H1 (cell line): ENCODE measurements at regions of chr2 and their contacts with region 1.

Region 1: DNA sequence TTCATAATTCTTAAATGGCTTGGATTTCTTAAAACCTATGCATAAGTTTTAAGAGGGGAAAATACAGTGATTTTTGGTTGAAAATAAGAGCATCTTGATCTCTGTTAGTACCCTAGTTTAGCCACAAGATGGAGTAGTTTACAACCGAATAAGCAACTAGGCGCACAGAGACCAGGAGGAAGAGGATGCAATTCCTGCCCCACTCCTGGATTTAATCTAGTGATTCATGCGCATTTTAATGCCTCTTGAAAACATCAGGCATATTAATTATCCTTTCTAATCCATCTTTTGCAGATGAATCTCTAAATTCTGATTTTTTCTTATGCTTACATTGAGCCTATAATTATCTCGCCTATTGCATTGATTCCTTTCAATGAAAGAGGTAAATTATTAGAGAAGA is 76.7 kb downstream of the MRPS9 start:
- DNase-seq: no peak
- H3K4me3 ChIP-seq: no peak overlapping the region
- H3K27ac ChIP-seq: no peak overlapping the region
- H3K4me1 ChIP-seq: no peaks in the 10 kb centered on the region
- H3K27me3 ChIP-seq: no peaks in the 10 kb centered on the region
- CTCF ChIP-seq: peak in 2 of 3 experiments; percentile 64 to 75; a peak in 3 of 4 replicates
- EP300 ChIP-seq: no peak
- POLR2A ChIP-seq: no peak
- RAD21 ChIP-seq: peak; percentile 93

Region 2: DNA sequence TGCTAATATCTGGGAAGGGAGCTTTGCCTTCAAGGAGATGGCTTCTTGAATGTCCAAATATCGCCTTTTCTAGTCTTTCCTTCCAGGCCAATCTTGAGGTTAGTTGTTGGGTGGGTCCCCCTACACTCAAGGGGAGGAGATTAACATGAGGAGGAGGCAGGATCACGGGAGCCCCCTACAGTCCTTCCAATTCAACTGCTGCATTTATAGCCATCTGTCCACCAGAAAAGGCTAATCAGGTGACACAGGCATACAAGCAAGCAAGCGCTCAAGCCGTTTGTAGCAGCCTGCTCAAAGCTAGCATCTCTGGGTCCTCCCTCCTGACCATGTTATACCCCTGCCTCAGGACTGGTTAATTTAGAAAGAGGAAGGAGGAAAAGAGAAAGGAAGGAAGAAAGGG is 10.9 kb after region 1 on chr2:
- CTCF ChIA-PET with region 1: interaction called, 46 read pairs
- POLR2A ChIA-PET with region 1: interaction called, 3 read pairs
- DNase-seq: peak in 1 of 2 experiments; percentile 61
- H3K4me3 ChIP-seq: peak overlapping the region in 2 of 4 experiments; percentile 26 to 43; a peak in 2 of 8 replicates
- H3K27ac ChIP-seq: no peak overlapping the region
- H3K4me1 ChIP-seq: peaks cover 0 to 6% (median 2%) of the 10 kb centered on the region in 4 experiments; a peak in 2 of 7 replicates
- H3K27me3 ChIP-seq: no peaks in the 10 kb centered on the region
- CTCF ChIP-seq: peak; percentile 53 to 77 (median 59)
- EP300 ChIP-seq: no peak
- POLR2A ChIP-seq: no peak
- RAD21 ChIP-seq: peak; percentile 30 to 48

Region 3: DNA sequence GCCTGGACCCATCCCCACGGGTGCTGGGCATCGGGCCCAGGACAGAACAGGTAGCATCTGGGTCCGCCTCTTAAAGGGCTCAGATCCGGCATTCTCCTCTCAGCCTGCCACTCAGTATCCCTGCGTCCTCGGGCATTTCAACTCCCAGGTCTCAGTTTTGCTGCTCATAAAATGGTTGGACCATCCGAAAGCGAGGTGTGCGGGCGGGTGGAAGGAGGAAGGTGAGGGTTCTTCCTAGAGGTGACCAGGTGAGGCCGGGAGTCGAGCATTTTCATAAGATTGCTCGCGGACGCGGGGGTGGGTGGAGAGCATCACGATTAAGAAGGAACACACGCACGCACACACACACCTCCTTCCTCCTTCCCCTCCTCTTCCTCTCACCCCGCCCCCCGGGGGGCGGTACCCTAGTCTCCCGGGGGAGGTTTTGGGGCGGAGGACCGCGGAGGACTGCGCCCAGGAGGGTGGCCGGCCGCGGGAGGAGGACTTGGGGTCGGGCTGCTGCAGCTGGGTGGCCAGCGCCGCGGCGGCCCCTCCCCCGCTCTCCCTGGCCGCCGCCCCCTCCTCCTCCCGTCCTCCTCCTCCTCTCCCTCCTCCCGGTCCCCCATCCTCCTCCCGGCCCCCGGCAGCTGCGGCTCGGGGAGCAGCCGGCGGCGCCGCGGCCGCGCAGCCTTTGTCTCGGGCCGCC is 29.1 kb after region 1 on chr2:
- CTCF ChIA-PET with region 1: interaction called, 65 read pairs
- POLR2A ChIA-PET with region 1: no interaction called
- DNase-seq: peak in 1 of 2 experiments; percentile 85
- H3K4me3 ChIP-seq: peak overlapping the region; percentile 61 to 78 (median 72)
- H3K27ac ChIP-seq: no peak overlapping the region
- H3K4me1 ChIP-seq: peaks cover 0 to 5% (median 2%) of the 10 kb centered on the region in 4 experiments; a peak in 3 of 7 replicates
- H3K27me3 ChIP-seq: peaks cover 0 to 3% (median 0%) of the 10 kb centered on the region in 4 experiments; a peak in 1 of 7 replicates
- CTCF ChIP-seq: no peak
- EP300 ChIP-seq: 0 out of 3 replicates have a peak, but pooled peaks of 1 of the 2 experiments have one; percentile 20
- POLR2A ChIP-seq: peak in 1 of 2 experiments; percentile 29; a peak in 1 of 3 replicates
- RAD21 ChIP-seq: no peak

Region 4: DNA sequence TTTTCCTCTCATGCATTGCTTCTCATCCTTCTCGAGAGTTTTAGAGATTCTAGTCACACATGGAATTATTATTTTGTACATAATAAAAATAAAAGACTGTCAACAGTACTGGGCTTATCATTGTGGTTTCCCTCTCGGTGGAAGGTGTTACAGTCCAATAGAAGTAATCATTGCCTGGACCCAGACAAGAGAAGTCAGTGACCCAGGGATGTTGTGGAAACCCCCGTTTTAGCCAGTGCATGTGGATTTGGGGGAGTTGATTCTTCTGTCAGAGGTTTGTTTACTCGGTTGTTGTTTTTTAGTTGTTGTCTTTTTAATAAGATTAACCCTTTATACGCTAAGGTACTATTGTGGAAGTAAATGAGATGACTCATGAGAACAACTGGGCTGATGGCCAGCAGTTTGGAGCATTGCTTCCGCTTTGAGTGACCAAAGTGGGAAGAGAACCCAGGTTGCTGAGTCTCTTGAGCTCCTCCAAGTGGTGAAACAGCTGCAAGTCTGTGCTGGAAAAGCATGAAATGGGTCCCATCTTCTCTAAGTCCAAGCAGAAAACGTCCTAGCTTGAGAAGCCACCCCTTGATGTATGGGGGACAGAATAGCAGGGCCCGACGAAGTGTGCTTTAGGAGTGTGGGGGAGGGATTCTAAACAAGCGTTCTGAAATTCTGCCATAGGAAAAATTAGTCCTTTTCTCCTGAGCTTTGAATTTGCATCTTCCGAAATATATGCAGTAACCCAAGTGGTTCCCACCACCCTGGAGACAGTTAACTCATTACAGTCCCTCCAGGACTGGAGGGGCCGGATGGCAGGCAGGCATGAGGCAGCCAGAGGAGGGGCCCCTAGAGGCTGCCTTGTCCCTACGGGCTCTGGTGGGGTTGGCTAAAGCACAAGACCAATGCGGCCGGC is 65.2 kb after region 1 on chr2:
- CTCF ChIA-PET with region 1: interaction called, 91 read pairs
- POLR2A ChIA-PET with region 1: no interaction called
- DNase-seq: no peak
- H3K4me3 ChIP-seq: no peak overlapping the region; a peak in 2 of 8 replicates
- H3K27ac ChIP-seq: no peak overlapping the region
- H3K4me1 ChIP-seq: peaks cover 6 to 17% (median 13%) of the 10 kb centered on the region in 4 experiments
- H3K27me3 ChIP-seq: peaks cover 0 to 27% (median 22%) of the 10 kb centered on the region in 4 experiments; a peak in 6 of 7 replicates
- CTCF ChIP-seq: peak; percentile 38 to 74 (median 65)
- EP300 ChIP-seq: no peak
- POLR2A ChIP-seq: no peak
- RAD21 ChIP-seq: peak; percentile 53 to 65

Region 5: GRCh38 chr2:105224444-105224843 is 109.9 kb after region 1 on chr2:
- CTCF ChIA-PET with region 1: interaction called, 541 read pairs
- POLR2A ChIA-PET with region 1: no interaction called
- DNase-seq: no peak
- H3K4me3 ChIP-seq: no peak overlapping the region
- H3K27ac ChIP-seq: no peak overlapping the region
- H3K4me1 ChIP-seq: peaks cover 0 to 5% (median 2%) of the 10 kb centered on the region in 4 experiments; a peak in 4 of 7 replicates
- H3K27me3 ChIP-seq: no peaks in the 10 kb centered on the region
- CTCF ChIP-seq: no peak
- EP300 ChIP-seq: no peak
- POLR2A ChIP-seq: no peak
- RAD21 ChIP-seq: no peak

Region 6: DNA sequence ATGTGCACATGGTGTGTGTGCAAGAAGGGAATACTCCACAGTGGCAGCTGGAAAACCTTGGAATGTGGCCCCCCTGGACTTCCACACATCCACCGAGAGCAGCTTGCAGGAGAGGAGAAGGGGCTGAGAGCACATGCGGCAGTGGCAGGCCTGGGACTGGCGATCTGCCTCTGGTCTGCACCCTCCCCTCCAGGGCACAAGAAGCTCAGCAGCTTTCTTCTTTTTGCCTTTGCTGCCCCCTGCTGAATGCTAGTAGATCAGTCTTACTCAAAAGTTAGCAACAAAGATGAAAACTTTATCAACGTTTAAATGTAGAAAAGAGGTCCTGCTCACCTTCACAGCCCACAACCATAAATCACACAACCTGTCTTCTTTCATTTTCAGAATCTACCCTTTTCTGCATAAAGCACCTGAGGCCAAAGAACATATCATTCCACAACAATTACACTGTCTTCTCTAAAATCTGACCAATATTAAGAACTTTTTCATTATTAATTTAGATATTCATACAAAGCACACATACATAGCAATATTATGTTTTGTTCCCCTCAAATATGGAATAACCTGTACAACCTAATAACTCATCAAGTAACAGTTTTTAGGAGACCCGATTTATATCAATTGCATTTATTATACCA is 180.4 kb after region 1 on chr2:
- CTCF ChIA-PET with region 1: interaction called, 26 read pairs
- POLR2A ChIA-PET with region 1: no interaction called
- DNase-seq: peak; percentile 44 to 74
- H3K4me3 ChIP-seq: no peak overlapping the region
- H3K27ac ChIP-seq: no peak overlapping the region
- H3K4me1 ChIP-seq: no peaks in the 10 kb centered on the region
- H3K27me3 ChIP-seq: no peaks in the 10 kb centered on the region
- CTCF ChIP-seq: peak; percentile 31 to 71 (median 71)
- EP300 ChIP-seq: no peak
- POLR2A ChIP-seq: no peak
- RAD21 ChIP-seq: peak; percentile 66 to 67

Region 7: GRCh38 chr2:105468582-105469042 is 354.1 kb after region 1 on chr2:
- CTCF ChIA-PET with region 1: no interaction called
- POLR2A ChIA-PET with region 1: no interaction called
- DNase-seq: no peak
- H3K4me3 ChIP-seq: no peak overlapping the region
- H3K27ac ChIP-seq: no peak overlapping the region
- H3K4me1 ChIP-seq: peaks cover 0 to 3% (median 0%) of the 10 kb centered on the region in 4 experiments; a peak in 3 of 7 replicates
- H3K27me3 ChIP-seq: no peaks in the 10 kb centered on the region
- CTCF ChIP-seq: no peak
- EP300 ChIP-seq: no peak
- POLR2A ChIP-seq: no peak
- RAD21 ChIP-seq: no peak